AG04449 (cell line): ENCODE measurements at regions of chr11 and their contacts with region 1.

Region 1: DNA sequence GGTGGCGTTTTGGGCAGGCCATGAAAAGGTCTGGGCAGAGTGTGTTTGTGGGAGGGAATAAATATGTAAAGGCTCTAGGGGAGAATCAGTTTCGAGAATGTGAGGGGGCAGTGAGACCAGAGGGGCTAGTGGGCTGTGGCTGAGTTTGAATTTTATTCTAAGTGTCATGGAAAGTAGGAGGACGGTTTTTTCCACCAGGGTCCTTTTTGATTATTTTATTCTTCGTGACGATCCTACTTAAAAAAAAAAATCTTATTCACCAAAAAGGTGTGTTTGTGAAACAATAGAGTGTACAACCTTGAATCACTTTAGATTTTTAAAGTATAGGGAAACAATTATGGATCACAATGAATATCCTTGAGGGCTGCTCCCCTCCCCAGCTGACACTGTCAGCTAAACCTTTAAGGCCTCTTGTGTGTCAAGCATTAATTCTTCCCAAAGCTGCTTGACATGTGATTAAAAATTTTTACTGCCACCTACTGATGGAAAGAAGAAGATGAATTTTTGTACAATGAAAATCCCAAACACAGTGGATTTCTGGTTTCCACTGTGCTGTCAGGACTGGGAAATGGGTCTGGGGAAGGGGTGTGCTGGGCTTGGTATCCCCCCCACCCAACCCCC is 107.5 kb upstream of the OR4B1 start:
- DNase-seq: no peak
- H3K4me3 ChIP-seq: no peak overlapping the region
- CTCF ChIP-seq: peak; percentile 20

Region 2: DNA sequence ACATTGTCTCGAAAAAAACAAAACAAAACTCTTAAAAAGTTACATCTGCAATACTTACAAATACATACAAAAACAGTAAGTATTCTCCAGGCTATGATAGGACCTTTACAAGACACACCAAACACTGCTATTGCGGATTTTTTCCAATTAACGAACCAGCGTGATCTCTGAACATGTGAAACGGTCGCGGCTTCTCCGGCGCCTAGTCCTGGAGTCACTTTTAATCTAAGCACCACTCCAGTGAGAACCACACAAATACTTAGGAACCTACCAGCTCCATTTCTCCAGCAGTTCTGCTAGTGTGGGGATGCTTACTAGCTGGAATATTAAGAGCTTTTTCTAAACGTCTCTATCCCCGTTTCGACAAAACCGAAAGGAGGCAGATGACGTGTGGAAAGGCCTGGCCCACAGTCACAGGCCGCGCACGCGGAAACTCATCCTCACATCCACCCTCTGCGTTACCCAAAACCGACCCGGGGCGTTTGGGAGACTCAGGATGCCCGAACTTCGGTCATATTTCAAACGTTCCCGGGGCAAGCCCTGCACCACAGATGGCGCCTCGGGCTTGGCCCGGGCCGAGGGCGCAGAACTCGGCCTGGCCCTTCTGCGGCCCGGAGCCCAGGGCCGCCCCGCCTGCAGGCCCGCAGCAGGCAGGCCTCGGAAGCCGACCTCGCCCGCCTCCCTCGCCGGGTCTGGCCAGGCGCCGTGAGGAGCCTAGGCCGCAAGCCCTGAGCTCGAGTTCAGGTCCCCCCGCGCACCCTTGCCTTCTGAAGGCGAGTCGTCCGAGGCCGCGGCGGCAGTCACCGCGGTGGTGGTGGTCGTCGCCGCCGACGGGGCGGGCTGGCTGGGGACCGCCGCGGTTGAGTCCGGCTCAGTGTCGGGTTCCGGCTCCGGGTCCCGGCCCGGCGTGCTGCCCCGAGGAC is 342.6 kb before region 1 on chr11:
- CTCF ChIA-PET with region 1: no interaction called
- POLR2A ChIA-PET with region 1: no interaction called
- DNase-seq: no peak
- H3K4me3 ChIP-seq: peak overlapping the region; percentile 75
- CTCF ChIP-seq: no peak

Region 3: GRCh38 chr11:47932544-47932943 is 176.6 kb before region 1 on chr11:
- CTCF ChIA-PET with region 1: interaction called, 591 read pairs
- POLR2A ChIA-PET with region 1: interaction called, 10 read pairs
- DNase-seq: no peak
- H3K4me3 ChIP-seq: no peak overlapping the region
- CTCF ChIP-seq: no peak

Region 4: DNA sequence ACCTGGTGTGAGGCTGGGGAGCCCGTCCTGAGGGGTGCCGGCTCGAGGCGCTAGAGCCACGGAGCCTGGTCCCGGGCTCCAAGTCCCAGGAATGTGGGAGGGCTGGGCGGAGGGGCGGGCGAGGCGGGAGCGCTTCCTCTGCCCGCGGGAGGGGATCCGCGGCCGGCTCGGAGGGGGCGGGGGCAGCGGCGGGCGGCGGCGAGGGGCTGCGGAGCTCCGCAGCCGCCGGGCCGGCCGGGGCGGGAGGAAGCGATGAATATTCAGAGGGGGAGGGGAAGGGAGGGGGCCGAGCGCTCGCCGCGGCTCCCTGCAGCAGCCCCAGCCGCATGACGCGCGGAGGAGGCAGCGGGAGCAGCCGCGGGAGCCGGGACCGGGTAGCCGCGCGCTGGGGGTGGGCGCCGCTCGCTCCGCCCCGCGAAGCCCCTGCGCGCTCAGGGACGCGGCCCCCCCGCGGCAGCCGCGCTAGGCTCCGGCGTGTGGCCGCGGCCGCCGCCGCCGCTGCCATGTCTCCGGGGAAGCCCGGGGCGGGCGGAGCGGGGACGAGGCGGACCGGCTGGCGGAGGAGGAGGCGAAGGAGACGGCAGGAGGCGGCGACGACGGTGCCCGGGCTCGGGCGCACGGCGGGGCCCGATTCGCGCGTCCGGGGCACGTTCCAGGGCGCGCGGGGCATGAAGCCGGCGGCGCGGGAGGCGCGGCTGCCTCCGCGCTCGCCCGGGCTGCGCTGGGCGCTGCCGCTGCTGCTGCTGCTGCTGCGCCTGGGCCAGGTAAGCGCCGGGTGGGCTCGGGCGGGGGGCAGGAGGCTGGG is 128.7 kb before region 1 on chr11 and contains the start of gene PTPRJ:
- CTCF ChIA-PET with region 1: interaction called, 21 read pairs
- POLR2A ChIA-PET with region 1: no interaction called
- DNase-seq: no peak
- H3K4me3 ChIP-seq: peak within 1 kb of the TSS; percentile 65
- CTCF ChIP-seq: no peak

Region 5: GRCh38 chr11:48081151-48082010 is 27.8 kb before region 1 on chr11:
- CTCF ChIA-PET with region 1: interaction called, 23 read pairs
- POLR2A ChIA-PET with region 1: no interaction called
- DNase-seq: peak; percentile 36
- H3K4me3 ChIP-seq: peak overlapping the region; percentile 8
- CTCF ChIP-seq: no peak

Region 6: DNA sequence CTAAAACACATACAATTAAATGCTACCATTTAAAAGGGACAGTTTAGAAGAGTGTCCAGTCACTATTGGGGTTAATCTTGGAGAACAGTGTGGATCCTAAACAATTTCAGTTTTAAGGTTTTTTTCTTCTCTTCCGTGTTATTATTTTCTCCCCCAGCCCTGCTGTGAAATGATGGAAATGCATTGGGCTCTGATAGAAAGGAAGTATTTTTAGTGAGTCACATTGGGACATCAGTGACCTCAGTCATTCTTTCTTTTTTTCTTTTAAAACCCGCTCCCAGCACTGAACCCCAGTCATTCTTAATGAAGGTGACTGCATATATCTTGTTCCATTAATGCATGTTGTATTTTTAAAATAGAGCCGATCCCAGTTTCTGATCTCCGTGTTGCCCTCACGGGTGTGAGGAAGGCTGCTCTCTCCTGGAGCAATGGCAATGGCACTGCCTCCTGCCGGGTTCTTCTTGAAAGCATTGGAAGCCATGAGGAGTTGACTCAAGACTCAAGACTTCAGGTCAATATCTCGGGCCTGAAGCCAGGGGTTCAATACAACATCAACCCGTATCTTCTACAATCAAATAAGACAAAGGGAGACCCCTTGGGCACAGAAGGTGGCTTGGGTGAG is 14.2 kb after region 1 on chr11:
- CTCF ChIA-PET with region 1: interaction called, 46 read pairs
- POLR2A ChIA-PET with region 1: no interaction called
- DNase-seq: no peak
- H3K4me3 ChIP-seq: no peak overlapping the region
- CTCF ChIP-seq: no peak

Region 7: DNA sequence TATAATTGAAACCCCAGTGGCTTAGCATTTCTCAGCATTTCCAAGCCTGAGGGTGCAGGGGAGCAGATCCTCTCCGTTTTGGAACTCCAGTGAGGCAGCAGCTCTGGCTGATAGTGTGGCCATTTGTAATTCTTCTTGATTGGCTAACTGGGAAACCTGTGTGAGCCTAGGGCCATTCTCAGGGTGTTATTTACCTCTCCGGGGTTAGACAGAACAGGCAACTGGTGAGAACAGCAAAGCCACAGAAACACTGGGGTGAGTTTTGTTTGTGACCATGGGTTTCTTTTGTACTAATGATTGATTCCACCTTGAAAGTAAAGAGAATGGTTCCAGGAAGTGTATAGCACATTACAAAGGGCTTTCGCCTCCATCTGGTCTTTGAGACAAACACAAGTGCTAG is 133.3 kb after region 1 on chr11:
- CTCF ChIA-PET with region 1: no interaction called
- POLR2A ChIA-PET with region 1: no interaction called
- DNase-seq: no peak
- H3K4me3 ChIP-seq: no peak overlapping the region
- CTCF ChIP-seq: no peak

Region 8: GRCh38 chr11:48305923-48306322 is 196.8 kb after region 1 on chr11 and contains the start of gene OR4S1:
- CTCF ChIA-PET with region 1: no interaction called
- POLR2A ChIA-PET with region 1: no interaction called
- DNase-seq: no peak
- H3K4me3 ChIP-seq: no peak within 1 kb of the TSS
- CTCF ChIP-seq: no peak